ENCODE measurements at regions of chr17 and their contacts with region 1.

Region 1: DNA sequence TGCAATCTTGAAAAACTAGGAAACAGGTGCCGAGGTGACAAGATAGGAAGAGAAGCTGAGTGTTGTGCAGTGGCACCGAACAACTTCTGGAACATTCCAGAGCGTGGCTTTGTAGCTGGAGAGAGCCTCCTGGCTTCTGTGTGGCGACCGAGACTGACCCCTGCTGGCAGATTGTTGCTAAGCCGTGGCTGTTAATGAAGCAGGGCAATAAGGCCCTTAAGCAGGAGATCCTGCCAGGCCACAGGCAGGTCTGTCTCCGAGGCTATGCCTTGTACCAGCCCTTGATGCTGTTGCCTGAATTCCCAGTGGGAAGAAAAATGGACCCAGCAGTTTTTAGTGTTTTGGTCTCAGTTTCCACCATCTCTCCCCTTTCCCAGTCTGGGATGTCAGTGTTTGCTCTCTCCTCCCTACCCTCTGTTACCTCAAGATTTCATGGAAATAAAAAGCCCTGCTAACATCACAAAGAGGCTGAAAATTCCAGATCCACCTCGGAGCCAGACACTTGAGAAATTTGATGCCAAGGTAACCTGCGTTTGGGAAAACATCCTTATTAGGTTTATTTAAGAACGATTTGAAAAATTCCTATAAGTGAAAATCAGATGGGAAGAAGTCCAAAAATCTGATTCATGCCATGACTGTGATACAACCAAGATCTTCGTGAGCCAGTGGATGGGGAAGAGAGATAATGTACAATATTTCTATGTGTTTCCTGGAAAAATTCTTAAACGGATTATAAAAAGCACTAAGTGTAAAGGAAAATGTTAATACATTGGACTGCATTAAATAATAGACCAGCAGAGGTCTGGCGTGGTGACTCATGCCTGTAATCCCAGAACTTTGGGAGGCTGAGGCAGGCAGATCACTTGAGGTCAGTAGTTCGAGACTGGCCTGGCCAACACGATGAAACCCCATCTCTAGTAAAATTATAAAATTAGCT is 265.1 kb downstream of the PRKCA start:
- DNase-seq: peak; percentile 23
- ATAC-seq: peak; percentile 98
- H3K4me3 ChIP-seq: no peak overlapping the region
- H3K27ac ChIP-seq: no peak overlapping the region
- H3K4me1 ChIP-seq: no peaks in the 10 kb centered on the region
- H3K27me3 ChIP-seq: no peaks in the 10 kb centered on the region
- CTCF ChIP-seq: peak; percentile 87
- EP300 ChIP-seq: no peak
- POLR2A ChIP-seq: no peak
- RAD21 ChIP-seq: peak; percentile 93

Region 2: GRCh38 chr17:66098040-66098439 is 469.5 kb before region 1 on chr17:
- CTCF ChIA-PET with region 1: no interaction called
- POLR2A ChIA-PET with region 1: no interaction called
- RAD21 ChIA-PET with region 1: no interaction called
- SMC1A ChIA-PET with region 1: no interaction called
- in situ Hi-C with region 1: no loop called
- intact Hi-C with region 1: no loop called
- DNase-seq: no peak
- ATAC-seq: no peak
- H3K4me3 ChIP-seq: no peak overlapping the region
- H3K27ac ChIP-seq: no peak overlapping the region
- H3K4me1 ChIP-seq: no peaks in the 10 kb centered on the region
- H3K27me3 ChIP-seq: no peaks in the 10 kb centered on the region
- CTCF ChIP-seq: no peak
- EP300 ChIP-seq: no peak
- POLR2A ChIP-seq: no peak
- RAD21 ChIP-seq: no peak

Region 3: GRCh38 chr17:66260275-66260674 is 307.2 kb before region 1 on chr17:
- CTCF ChIA-PET with region 1: interaction called, 87 read pairs
- POLR2A ChIA-PET with region 1: no interaction called
- RAD21 ChIA-PET with region 1: interaction called, 29 read pairs
- SMC1A ChIA-PET with region 1: interaction called, 65 read pairs
- in situ Hi-C with region 1: loop called (anchors 5 kb)
- intact Hi-C with region 1: loop called (anchors 1 kb)
- DNase-seq: no peak
- ATAC-seq: no peak
- H3K4me3 ChIP-seq: no peak overlapping the region
- H3K27ac ChIP-seq: no peak overlapping the region
- H3K4me1 ChIP-seq: no peaks in the 10 kb centered on the region
- H3K27me3 ChIP-seq: no peaks in the 10 kb centered on the region
- CTCF ChIP-seq: no peak
- EP300 ChIP-seq: no peak
- POLR2A ChIP-seq: no peak
- RAD21 ChIP-seq: no peak

Region 4: DNA sequence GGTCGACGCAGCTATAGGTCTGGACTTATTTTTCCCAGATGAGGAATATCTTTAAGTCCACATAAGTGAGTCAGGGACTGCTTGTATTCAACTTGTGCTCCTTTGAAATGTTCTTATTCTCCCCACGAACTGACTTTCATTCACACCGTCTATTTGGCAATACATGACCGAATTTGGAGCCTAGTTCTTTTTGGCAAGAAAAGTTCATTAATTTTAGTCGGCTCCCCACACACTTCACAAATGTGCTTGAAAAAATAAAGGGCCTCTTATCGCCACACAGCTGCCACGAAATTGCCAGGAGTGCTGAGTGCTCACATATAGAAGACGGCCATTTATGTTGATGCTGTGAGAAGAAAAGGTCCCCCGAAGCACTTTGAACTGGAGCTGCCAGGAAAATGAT is 112.4 kb before region 1 on chr17:
- CTCF ChIA-PET with region 1: no interaction called
- POLR2A ChIA-PET with region 1: no interaction called
- RAD21 ChIA-PET with region 1: no interaction called
- SMC1A ChIA-PET with region 1: no interaction called
- in situ Hi-C with region 1: no loop called
- intact Hi-C with region 1: no loop called
- DNase-seq: no peak
- ATAC-seq: no peak
- H3K4me3 ChIP-seq: no peak overlapping the region
- H3K27ac ChIP-seq: no peak overlapping the region
- H3K4me1 ChIP-seq: no peaks in the 10 kb centered on the region
- H3K27me3 ChIP-seq: no peaks in the 10 kb centered on the region
- CTCF ChIP-seq: no peak
- EP300 ChIP-seq: no peak
- POLR2A ChIP-seq: no peak
- RAD21 ChIP-seq: no peak

Region 5: DNA sequence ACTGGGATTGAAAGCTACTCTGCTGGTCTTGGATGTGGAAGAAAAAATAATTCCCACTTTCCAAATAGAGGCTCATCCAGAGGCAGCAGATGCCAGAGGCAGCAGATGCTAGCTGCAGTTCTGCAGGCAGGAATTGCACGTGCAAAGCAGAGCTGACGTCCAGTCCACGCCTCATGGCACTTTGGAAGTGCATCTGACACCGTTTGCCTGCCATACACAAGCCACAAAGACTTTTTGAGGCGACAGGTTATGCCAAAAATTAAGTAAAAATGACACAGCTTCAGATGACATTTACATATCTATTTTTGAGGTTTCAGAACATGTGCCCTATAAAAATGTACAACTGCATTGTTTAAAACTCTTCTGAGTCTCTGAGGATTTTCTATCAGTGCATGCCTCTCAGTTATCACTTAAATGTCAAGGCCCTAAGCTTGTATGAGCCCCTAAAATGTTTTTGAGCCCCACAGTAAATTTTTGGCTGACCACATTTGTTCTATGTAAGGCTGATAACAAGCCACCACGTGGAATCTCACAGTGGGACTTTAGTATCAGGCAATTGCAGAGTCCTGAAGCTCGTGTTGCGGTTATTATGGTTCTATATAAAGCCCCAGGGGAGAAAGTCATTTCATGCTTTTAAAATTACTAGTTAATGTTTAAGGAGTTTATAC is 25.9 kb before region 1 on chr17:
- CTCF ChIA-PET with region 1: interaction called, 12 read pairs
- POLR2A ChIA-PET with region 1: no interaction called
- RAD21 ChIA-PET with region 1: interaction called, 5 read pairs
- SMC1A ChIA-PET with region 1: interaction called, 24 read pairs
- in situ Hi-C with region 1: no loop called
- intact Hi-C with region 1: no loop called
- DNase-seq: peak; percentile 40
- ATAC-seq: peak; percentile 83
- H3K4me3 ChIP-seq: 0 out of 2 replicates have a peak overlapping the region, but pooled peaks have one; percentile 14
- H3K27ac ChIP-seq: peak overlapping the region; percentile 58; the same call in 1 of the 2 replicates
- H3K4me1 ChIP-seq: peaks cover 9% of the 10 kb centered on the region
- H3K27me3 ChIP-seq: no peaks in the 10 kb centered on the region
- CTCF ChIP-seq: no peak
- EP300 ChIP-seq: peak; percentile 12 to 55; a peak in 2 of 4 replicates
- POLR2A ChIP-seq: no peak
- RAD21 ChIP-seq: no peak

Region 6: GRCh38 chr17:66655861-66656260 is 88.4 kb after region 1 on chr17:
- CTCF ChIA-PET with region 1: no interaction called
- POLR2A ChIA-PET with region 1: no interaction called
- RAD21 ChIA-PET with region 1: no interaction called
- SMC1A ChIA-PET with region 1: no interaction called
- in situ Hi-C with region 1: no loop called
- intact Hi-C with region 1: no loop called
- DNase-seq: no peak
- ATAC-seq: no peak
- H3K4me3 ChIP-seq: no peak overlapping the region
- H3K27ac ChIP-seq: no peak overlapping the region
- H3K4me1 ChIP-seq: no peaks in the 10 kb centered on the region
- H3K27me3 ChIP-seq: no peaks in the 10 kb centered on the region
- CTCF ChIP-seq: no peak
- EP300 ChIP-seq: no peak
- POLR2A ChIP-seq: no peak
- RAD21 ChIP-seq: no peak

Region 7: GRCh38 chr17:66673668-66674315 is 106.3 kb after region 1 on chr17:
- CTCF ChIA-PET with region 1: interaction called, 14 read pairs
- POLR2A ChIA-PET with region 1: no interaction called
- RAD21 ChIA-PET with region 1: interaction called, 8 read pairs
- SMC1A ChIA-PET with region 1: interaction called, 5 read pairs
- in situ Hi-C with region 1: no loop called
- intact Hi-C with region 1: loop called (anchors 5 kb)
- DNase-seq: no peak
- ATAC-seq: peak; percentile 72
- H3K4me3 ChIP-seq: no peak overlapping the region
- H3K27ac ChIP-seq: no peak overlapping the region
- H3K4me1 ChIP-seq: no peaks in the 10 kb centered on the region
- H3K27me3 ChIP-seq: no peaks in the 10 kb centered on the region
- CTCF ChIP-seq: peak; percentile 49 to 63 (median 55); a peak in 5 of 6 replicates
- EP300 ChIP-seq: no peak
- POLR2A ChIP-seq: no peak
- RAD21 ChIP-seq: peak; percentile 74

Region 8: GRCh38 chr17:66807182-66807581 is 239.7 kb after region 1 on chr17:
- CTCF ChIA-PET with region 1: no interaction called
- POLR2A ChIA-PET with region 1: no interaction called
- RAD21 ChIA-PET with region 1: no interaction called
- SMC1A ChIA-PET with region 1: no interaction called
- in situ Hi-C with region 1: no loop called
- intact Hi-C with region 1: no loop called
- DNase-seq: no peak
- ATAC-seq: no peak
- H3K4me3 ChIP-seq: no peak overlapping the region
- H3K27ac ChIP-seq: no peak overlapping the region
- H3K4me1 ChIP-seq: no peaks in the 10 kb centered on the region
- H3K27me3 ChIP-seq: no peaks in the 10 kb centered on the region
- CTCF ChIP-seq: no peak
- EP300 ChIP-seq: no peak
- POLR2A ChIP-seq: no peak
- RAD21 ChIP-seq: no peak

Measured in GM12878 (cell line).